ENCODE measurements at regions of chr1 and their contacts with region 1.

Region 1: DNA sequence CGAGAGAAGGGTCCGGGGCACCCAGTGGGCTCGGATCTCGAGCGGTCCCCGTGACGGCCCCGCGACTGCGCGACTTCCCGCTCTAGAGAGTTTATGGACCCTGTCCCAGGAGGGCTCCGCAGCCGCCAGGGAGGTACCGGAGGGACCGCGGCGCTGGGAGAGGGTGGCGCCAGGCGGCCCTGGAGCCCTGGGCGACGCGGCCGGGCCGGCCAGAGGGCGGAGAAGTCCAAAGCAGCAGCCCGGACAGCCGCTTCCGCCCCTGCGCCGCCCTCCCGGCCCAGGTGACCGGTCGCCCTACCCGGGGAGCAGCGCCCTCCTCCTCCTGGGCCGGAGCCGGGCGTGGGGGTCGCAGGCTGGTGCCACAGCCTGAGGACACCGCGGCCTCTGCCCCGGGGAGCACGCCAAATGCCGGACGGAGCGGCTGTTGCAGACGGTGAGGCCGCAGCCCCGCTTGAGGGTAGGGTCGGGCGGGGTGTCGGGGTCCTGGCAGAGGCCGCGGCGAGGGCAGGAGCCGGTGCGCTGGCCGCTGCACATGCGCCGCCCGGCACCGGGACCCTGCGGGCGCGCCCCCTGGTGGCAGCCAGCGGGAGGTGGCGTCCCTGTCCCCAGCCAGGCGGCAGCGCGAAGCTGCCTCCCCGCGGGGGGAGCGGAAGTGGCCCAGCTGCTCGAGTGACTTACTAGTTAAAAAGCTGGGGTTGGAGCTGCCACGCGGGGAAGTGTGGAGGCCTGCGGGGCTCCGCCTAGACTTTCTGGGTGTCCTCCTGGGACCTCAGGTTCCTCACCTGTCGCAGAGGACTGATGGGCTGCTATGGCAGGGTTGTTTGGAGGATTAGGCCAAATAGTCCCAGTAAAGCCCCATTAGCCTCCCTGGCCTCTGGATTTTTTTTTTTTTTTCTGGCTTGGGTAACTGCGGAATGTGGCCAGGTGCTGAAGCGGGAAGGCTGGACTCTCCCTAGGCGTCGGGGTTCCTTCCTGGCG is 20.9 kb upstream of the ZNF678 start:
- DNase-seq: peak; percentile 72 to 98 (median 83)

Region 2: DNA sequence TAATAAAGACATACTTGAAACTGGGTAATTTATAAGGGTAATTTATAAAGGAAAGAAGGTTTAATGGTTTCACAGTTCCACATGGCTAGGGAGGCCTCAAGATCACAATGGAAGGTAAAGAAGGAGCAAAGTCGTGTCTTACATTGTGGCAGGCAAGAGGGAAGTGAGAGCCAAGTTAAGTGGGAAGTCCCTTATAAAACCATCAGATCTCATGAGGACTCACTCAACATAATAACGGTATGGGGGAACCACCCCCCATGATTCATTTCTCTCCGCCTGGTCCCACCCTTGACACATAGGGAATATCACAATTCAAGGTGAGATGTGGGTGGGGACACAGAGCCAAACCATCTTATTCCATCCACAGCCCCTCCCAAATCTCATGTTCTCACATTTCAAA is 55.9 kb before region 1 on chr1:
- intact Hi-C with region 1: loop called (anchors 1 kb)
- DNase-seq: no peak

Region 3: GRCh38 chr1:227604446-227604845 is 62.0 kb after region 1 on chr1:
- intact Hi-C with region 1: no loop called
- DNase-seq: no peak